Activated CD4-positive, alpha-beta T cell treated with anti-CD3 and anti-CD28 coated beads for 36 hours (primary cell): ENCODE measurements at regions of chr16 and their contacts with region 1.

Region 1: DNA sequence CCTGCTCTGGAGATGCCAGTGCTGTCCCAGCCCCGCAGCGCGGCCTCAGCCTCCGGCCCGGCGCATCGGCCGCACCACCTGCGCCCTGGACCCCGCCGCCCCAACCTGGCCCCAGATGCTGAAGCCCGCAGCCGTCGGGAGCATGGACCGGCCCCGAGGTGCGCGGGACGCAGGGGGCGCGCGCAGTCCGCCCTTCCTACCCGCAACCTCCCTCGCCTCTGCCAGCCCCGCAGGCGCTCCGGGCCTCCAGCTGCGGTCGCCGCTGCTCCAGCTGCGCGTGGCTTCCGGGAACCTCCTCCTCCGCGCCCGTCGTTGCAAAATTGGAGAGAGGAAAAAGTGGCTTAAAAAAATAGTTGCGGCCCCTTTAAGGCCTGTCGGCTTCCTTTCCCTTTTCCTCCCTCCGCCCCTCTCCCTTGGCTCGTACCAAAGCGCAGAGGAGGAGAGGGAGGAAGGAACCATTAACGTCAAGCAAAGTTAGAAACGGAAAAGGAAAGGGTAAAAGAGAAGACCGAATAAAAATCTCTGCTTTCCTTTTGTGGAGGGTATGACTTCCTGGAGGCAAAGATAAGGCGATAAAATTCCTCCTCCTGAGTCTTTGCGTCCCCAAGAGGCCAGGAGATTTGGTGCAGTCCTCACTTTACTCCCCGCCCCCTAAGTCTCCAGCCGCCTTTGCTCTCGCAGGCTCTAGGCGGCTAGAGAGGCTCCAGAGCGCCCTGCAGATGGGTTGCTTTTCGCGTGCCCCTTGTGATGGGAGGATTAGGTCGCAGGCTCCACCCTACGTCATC is at the start of gene CDIPT:
- DNase-seq: peak; percentile 96
- ATAC-seq: peak; percentile 99
- H3K4me3 Mint-ChIP-seq: peak within 1 kb of the TSS; percentile 90
- H3K27ac Mint-ChIP-seq: peak within 1 kb of the TSS; percentile 98
- H3K4me1 Mint-ChIP-seq: peaks cover 18% of the 10 kb centered on the region
- H3K27me3 Mint-ChIP-seq: no peaks in the 10 kb centered on the region
- total RNA-seq, gene CDIPT: 35.1 to 50.0 TPM

Region 2: GRCh38 chr16:29664091-29664921 is 198.8 kb before region 1 on chr16:
- CTCF ChIA-PET with region 1: no interaction called
- POLR2A ChIA-PET with region 1: no interaction called
- intact Hi-C with region 1: loop called in 1 of 2 experiments (anchors 1 kb)
- DNase-seq: peak; percentile 77
- ATAC-seq: peak; percentile 31
- H3K4me3 Mint-ChIP-seq: peak overlapping the region; percentile 99
- H3K27ac Mint-ChIP-seq: peak overlapping the region; percentile 97
- H3K4me1 Mint-ChIP-seq: peaks cover 51% of the 10 kb centered on the region
- H3K27me3 Mint-ChIP-seq: no peaks in the 10 kb centered on the region

Region 3: DNA sequence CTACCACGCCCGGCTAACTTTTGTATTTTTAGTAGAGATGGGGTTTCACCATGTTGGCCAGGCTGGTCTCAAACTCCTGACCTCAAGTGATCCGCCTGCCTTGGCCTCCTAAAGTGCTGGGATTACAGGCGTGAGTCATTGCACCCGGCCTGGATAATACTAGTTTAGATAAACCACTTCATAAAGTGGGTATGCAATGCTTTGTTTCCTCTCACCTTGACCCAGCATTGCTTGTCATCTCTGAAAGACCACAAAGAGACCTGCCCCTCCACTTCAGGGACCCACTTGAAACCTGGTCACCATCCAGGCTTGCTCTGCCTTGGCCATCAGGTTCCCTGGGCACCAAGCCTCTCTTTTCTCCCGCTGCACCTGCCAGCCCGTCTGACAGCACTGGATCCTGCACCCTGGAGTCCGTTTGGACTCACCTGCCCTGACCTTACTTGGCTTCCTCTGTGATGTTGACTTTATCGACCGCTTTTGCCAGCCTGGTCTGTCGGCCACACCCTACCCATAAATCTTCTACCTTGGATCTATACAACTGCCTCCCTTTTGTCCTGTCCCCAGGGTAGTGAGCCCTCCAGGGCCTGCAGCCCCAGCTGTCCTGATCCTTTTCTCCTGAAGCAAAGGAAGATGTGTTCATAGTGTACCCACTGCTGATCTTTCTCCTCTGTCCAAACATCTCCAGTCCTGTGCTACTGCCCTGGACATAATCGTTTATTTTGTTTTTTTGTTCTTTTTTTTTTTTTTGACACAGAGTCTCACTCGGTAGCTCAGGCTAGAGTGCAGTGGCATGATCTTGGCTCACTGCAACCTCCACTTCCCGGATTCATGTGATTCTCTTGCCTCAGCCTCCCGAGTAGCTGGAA is 97.7 kb before region 1 on chr16:
- CTCF ChIA-PET with region 1: no interaction called
- POLR2A ChIA-PET with region 1: no interaction called
- intact Hi-C with region 1: no loop called
- DNase-seq: no peak
- ATAC-seq: no peak
- H3K4me3 Mint-ChIP-seq: no peak overlapping the region
- H3K27ac Mint-ChIP-seq: no peak overlapping the region
- H3K4me1 Mint-ChIP-seq: peaks cover 1% of the 10 kb centered on the region
- H3K27me3 Mint-ChIP-seq: no peaks in the 10 kb centered on the region

Region 4: GRCh38 chr16:29779474-29779873 is 83.6 kb before region 1 on chr16:
- CTCF ChIA-PET with region 1: no interaction called
- POLR2A ChIA-PET with region 1: no interaction called
- intact Hi-C with region 1: no loop called
- DNase-seq: no peak
- ATAC-seq: no peak
- H3K4me3 Mint-ChIP-seq: no peak overlapping the region
- H3K27ac Mint-ChIP-seq: no peak overlapping the region
- H3K4me1 Mint-ChIP-seq: peaks cover 21% of the 10 kb centered on the region
- H3K27me3 Mint-ChIP-seq: no peaks in the 10 kb centered on the region

Region 5: GRCh38 chr16:29805378-29806098 is 57.5 kb before region 1 on chr16:
- CTCF ChIA-PET with region 1: interaction called, 8 read pairs
- POLR2A ChIA-PET with region 1: interaction called, 3 read pairs
- intact Hi-C with region 1: loop called (anchors 1 kb)
- DNase-seq: peak; percentile 99
- ATAC-seq: peak; percentile 64
- H3K4me3 Mint-ChIP-seq: peak overlapping the region; percentile 99
- H3K27ac Mint-ChIP-seq: peak overlapping the region; percentile 100
- H3K4me1 Mint-ChIP-seq: peaks cover 37% of the 10 kb centered on the region
- H3K27me3 Mint-ChIP-seq: no peaks in the 10 kb centered on the region

Region 6: GRCh38 chr16:29877266-29877961 is 14.3 kb after region 1 on chr16:
- CTCF ChIA-PET with region 1: interaction called, 4 read pairs
- POLR2A ChIA-PET with region 1: interaction called, 4 read pairs
- intact Hi-C with region 1: loop called in 1 of 2 experiments (anchors 1 kb)
- DNase-seq: peak; percentile 85
- ATAC-seq: peak; percentile 93
- H3K4me3 Mint-ChIP-seq: peak overlapping the region; percentile 29
- H3K27ac Mint-ChIP-seq: no peak overlapping the region
- H3K4me1 Mint-ChIP-seq: peaks cover 7% of the 10 kb centered on the region
- H3K27me3 Mint-ChIP-seq: peaks cover 22% of the 10 kb centered on the region

Region 7: GRCh38 chr16:29909391-29909790 is 46.3 kb after region 1 on chr16:
- CTCF ChIA-PET with region 1: no interaction called
- POLR2A ChIA-PET with region 1: no interaction called
- intact Hi-C with region 1: no loop called
- DNase-seq: no peak
- ATAC-seq: no peak
- H3K4me3 Mint-ChIP-seq: no peak overlapping the region
- H3K27ac Mint-ChIP-seq: no peak overlapping the region
- H3K4me1 Mint-ChIP-seq: no peaks in the 10 kb centered on the region
- H3K27me3 Mint-ChIP-seq: no peaks in the 10 kb centered on the region

Region 8: GRCh38 chr16:29950806-29951461 is 87.9 kb after region 1 on chr16:
- CTCF ChIA-PET with region 1: no interaction called
- POLR2A ChIA-PET with region 1: no interaction called
- intact Hi-C with region 1: no loop called
- DNase-seq: no peak
- ATAC-seq: no peak
- H3K4me3 Mint-ChIP-seq: no peak overlapping the region
- H3K27ac Mint-ChIP-seq: no peak overlapping the region
- H3K4me1 Mint-ChIP-seq: no peaks in the 10 kb centered on the region
- H3K27me3 Mint-ChIP-seq: peaks cover 4% of the 10 kb centered on the region

Region 9: GRCh38 chr16:29961479-29962343 is 98.6 kb after region 1 on chr16 and contains the start of gene TMEM219:
- CTCF ChIA-PET with region 1: interaction called, 3 read pairs
- POLR2A ChIA-PET with region 1: no interaction called
- intact Hi-C with region 1: loop called in 1 of 2 experiments (anchors 1 kb)
- DNase-seq: peak; percentile 94
- ATAC-seq: peak; percentile 95
- H3K4me3 Mint-ChIP-seq: peak within 1 kb of the TSS; percentile 88
- H3K27ac Mint-ChIP-seq: peak within 1 kb of the TSS; percentile 87
- H3K4me1 Mint-ChIP-seq: peaks cover 17% of the 10 kb centered on the region
- H3K27me3 Mint-ChIP-seq: no peaks in the 10 kb centered on the region
- total RNA-seq, gene TMEM219: 34.6 to 42.5 TPM

Region 10: DNA sequence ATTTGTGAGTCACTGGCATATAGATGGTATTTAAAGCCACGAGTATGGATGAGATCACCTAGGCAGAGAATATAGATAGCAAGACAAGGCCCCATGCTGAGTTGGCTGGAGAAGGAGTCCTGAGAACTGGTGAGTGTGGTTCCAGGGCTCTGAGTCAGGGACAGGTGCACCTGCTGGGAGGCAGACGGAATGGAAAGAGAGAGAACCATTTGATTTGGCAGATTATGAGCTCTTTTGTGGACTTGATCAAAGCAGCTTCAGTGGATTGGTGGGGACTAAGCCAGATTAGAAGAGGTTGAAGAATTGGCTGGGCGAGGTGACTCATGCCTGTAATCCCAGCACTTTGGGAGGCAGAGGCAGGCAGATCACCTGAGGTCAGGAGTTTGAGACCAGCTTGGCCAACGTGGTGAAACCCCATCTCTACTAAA is 155.7 kb after region 1 on chr16:
- CTCF ChIA-PET with region 1: no interaction called
- POLR2A ChIA-PET with region 1: no interaction called
- intact Hi-C with region 1: loop called (anchors 2 to 10 kb)
- DNase-seq: no peak
- ATAC-seq: peak; percentile 36
- H3K4me3 Mint-ChIP-seq: no peak overlapping the region
- H3K27ac Mint-ChIP-seq: no peak overlapping the region
- H3K4me1 Mint-ChIP-seq: peaks cover 7% of the 10 kb centered on the region
- H3K27me3 Mint-ChIP-seq: no peaks in the 10 kb centered on the region